Dendritic cell treated with granulocyte-macrophage colony-stimulating factor and Interleukin-4, amounts not matched to agents 40 ng/mL and 50 ng/mL, for 4 days (primary cell): ENCODE measurements at regions of chr13 and their contacts with region 1.

Region 1: GRCh38 chr13:33542283-33543088 is 256.9 kb upstream of the STARD13 start:
- H3K4me3 Mint-ChIP-seq: peak overlapping the region; percentile 85
- H3K27ac Mint-ChIP-seq: peak overlapping the region; percentile 99
- H3K4me1 Mint-ChIP-seq: peaks cover 34% of the 10 kb centered on the region
- H3K27me3 Mint-ChIP-seq: no peaks in the 10 kb centered on the region

Region 2: GRCh38 chr13:32639502-32640105 is 902.9 kb before region 1 on chr13:
- intact Hi-C with region 1: loop called (anchors 10 kb)
- H3K4me3 Mint-ChIP-seq: no peak overlapping the region
- H3K27ac Mint-ChIP-seq: no peak overlapping the region
- H3K4me1 Mint-ChIP-seq: peaks cover 23% of the 10 kb centered on the region
- H3K27me3 Mint-ChIP-seq: no peaks in the 10 kb centered on the region

Region 3: DNA sequence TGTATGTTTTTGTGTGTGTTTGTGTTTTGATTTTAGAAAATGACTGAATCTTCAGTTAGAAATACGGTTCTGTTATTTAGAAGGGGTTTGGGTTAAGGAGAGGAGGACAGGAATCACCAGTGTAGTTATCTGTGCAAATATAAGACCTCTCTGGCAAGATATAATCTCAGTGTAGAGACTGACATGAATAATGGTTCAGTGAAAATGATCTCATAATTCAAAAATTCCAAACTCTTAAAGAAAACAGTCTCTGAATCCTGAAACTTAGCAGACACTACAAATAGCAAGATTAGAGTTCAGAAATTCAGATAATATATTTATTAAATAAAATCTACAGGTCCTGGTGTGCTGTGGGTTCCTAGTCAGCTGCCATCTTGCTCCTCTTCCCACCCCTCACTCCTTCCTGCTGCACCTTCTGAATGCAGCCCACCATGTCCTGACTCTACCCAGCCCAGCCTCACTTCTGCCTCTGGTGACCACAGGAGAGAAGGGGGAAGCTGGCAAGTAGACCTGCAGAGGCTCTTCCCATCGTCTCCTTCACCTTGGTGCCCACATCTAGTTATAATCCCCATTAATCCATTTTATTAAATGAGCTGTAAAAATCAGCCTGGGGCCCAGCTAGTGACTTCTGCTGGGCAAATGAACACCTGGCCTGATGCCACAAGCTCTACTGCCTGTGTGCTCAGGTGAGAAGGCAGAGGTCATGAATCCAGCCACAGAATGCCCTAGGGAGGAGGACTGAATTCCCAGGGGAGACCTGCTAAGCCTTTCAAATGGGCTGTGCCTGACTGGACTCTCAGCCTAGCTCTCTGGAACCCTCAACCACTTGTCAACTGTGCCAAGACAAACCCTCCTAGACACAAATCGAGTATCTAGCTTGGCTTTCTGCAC is 882.5 kb before region 1 on chr13:
- intact Hi-C with region 1: no loop called
- H3K4me3 Mint-ChIP-seq: no peak overlapping the region
- H3K27ac Mint-ChIP-seq: no peak overlapping the region
- H3K4me1 Mint-ChIP-seq: peaks cover 10% of the 10 kb centered on the region
- H3K27me3 Mint-ChIP-seq: no peaks in the 10 kb centered on the region

Region 4: GRCh38 chr13:33349986-33350826 is 192.3 kb before region 1 on chr13:
- intact Hi-C with region 1: loop called (anchors 2 kb)
- H3K4me3 Mint-ChIP-seq: peak overlapping the region; percentile 88
- H3K27ac Mint-ChIP-seq: peak overlapping the region; percentile 84
- H3K4me1 Mint-ChIP-seq: peaks cover 51% of the 10 kb centered on the region
- H3K27me3 Mint-ChIP-seq: peaks cover 11% of the 10 kb centered on the region

Region 5: DNA sequence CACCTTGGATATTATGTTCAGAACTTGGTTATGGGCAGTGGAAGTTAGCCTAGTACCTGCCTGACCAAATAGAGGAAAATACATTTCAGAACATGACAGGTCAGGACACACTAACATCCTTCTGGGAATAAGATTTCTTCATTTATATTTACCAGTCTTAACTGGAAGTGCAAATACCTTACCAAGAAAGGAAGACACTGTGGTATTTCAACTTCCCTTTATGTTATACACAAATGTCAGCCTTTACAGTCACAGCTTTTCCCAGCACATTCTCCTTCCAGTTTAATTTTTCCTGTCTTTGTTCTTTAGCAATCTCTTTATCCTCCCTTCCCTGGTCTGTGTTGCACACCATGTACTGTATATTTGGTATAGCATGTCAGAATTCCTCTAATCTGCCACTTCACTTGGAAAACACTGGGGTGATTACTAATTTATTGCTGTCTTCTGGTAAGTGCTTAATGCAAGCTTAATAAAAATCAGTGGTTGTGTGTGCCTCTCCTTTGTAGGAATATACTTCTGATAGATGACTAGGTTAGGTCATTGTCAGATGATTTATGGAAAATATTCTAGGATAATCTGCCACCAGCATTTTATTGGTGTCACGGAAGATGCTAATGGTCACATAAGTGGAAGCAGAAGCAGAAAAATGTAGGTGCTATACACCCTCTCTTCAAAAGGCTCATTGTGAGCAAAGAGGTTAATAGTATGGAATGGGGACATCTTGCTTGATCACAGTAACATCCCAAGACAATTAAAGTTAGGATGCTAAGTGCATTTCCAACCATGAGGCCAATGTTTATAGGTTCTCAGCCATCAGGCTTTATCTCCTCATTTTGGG is 132.6 kb before region 1 on chr13:
- intact Hi-C with region 1: no loop called
- H3K4me3 Mint-ChIP-seq: no peak overlapping the region
- H3K27ac Mint-ChIP-seq: peak overlapping the region; percentile 11
- H3K4me1 Mint-ChIP-seq: peaks cover 13% of the 10 kb centered on the region
- H3K27me3 Mint-ChIP-seq: no peaks in the 10 kb centered on the region

Region 6: DNA sequence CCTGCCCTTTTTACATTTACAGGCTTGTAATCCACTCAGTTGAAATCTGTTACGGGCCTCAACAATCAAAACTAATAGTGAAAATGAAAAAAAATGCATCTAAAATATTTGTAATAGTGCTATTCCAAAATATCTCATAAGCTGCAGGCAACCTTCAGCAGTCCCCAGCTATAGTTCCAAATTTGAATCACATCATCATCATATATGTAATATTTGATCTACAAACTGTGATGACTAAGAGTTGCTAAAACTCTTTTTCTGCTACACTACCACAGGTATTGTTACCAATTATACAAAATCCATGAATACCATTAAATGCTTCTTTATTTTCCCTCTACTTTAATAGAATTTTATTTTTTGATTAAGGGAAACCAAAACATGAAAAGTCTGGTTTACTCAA is 154.0 kb after region 1 on chr13:
- intact Hi-C with region 1: no loop called
- H3K4me3 Mint-ChIP-seq: no peak overlapping the region
- H3K27ac Mint-ChIP-seq: no peak overlapping the region
- H3K4me1 Mint-ChIP-seq: no peaks in the 10 kb centered on the region
- H3K27me3 Mint-ChIP-seq: peaks cover 2% of the 10 kb centered on the region

Region 7: DNA sequence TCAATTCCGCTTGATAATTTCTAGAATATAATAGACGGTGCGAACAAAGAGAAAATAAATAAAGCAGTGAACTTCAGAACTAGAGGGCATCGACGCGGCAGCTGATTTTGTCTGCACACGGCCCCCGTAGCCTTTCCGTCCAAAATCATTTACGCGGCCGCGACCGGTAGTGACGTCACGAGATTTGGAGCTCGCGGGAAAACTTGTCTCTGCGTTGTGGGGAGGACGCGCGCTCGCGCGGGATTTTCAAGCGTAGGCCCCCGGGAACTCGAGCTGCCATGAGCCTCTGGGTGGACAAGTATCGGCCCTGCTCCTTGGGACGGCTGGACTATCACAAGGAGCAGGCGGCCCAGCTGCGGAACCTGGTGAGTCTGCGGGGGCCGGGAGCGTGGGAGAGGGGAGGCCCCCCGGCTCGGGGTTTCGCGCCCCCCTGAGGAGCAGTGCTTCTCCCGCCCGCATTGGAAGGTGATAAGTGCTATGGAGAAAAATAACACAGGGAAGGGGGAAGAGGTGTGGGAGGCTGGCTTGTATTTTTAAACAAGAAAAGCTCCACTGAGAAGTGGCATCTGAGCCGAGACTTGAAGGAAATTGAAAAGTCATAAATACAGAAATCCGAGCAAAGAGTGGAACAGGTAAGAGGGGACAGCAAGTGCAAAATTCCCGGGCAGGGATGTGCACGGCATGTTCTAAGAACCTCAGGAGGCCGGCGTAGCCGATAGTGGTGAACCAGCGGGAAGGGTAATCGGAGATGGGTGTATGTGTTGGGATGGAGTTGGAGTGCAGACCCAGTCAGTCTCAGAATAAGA is 275.6 kb after region 1 on chr13 and contains the start of gene RFC3:
- intact Hi-C with region 1: loop called (anchors 2 kb)
- H3K4me3 Mint-ChIP-seq: peak within 1 kb of the TSS; percentile 96
- H3K27ac Mint-ChIP-seq: peak within 1 kb of the TSS; percentile 93
- H3K4me1 Mint-ChIP-seq: peaks cover 13% of the 10 kb centered on the region
- H3K27me3 Mint-ChIP-seq: peaks cover 4% of the 10 kb centered on the region